HepG2 (cell line): ENCODE measurements at regions of chr11 and their contacts with region 1.

Region 1: DNA sequence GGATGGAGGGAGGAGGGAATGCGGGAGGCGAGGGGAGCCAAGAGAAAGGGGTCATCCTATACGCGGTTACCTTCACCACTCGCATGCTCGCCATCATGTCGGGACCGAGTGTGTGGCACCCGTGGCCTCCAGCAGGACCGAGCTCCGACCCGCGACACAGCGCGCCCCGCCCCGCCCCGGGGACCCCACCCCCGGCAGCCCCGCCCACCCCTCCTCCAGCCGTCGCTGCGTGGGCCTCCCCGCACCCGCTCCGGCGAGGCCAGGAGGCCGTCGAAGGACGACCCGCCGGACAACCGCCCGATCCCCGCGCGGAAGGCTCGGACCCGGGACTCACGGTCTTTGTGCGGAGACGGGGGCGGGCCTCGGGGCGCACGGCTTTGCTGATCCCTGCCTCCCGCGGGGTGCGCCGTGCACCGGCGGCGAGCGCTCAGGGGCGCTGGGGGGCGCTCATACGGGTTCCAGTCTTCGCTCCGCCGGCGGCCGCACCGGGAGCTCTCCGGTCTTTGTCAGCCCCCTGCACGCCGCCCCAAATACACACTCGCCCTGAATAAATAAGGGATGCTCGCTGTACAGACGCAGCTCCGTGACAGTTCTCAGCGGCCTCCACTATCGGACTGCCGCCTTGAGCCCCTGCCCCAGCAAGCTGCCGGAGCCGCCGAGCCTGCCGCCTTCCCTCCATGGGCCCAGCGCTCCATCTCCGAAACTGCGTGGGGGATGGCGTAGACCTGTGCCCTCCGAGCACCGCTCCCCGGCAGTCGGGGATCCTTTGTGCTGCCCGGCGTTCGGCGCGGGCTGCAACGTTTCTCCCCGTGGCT is at the start of gene UBE2L6:
- DNase-seq: no peak
- ATAC-seq: peak; percentile 89
- H3K4me3 ChIP-seq: peak within 1 kb of the TSS; percentile 82 to 98 (median 84)
- H3K27ac ChIP-seq: peak within 1 kb of the TSS; percentile 40
- H3K4me1 ChIP-seq: peaks cover 24% of the 10 kb centered on the region
- H3K27me3 ChIP-seq: no peaks in the 10 kb centered on the region; a peak in 1 of 5 replicates
- CTCF ChIP-seq: peak; percentile 95; the same call in 1 of the 2 replicates
- EP300 ChIP-seq: no peak
- POLR2A ChIP-seq: peak in 1 of 2 experiments; percentile 55; a peak in 1 of 4 replicates
- RAD21 ChIP-seq: no peak; the same call in 1 of the 2 replicates
- total RNA-seq, gene UBE2L6: 30.3 and 37.6 TPM in 2 replicates

Region 2: DNA sequence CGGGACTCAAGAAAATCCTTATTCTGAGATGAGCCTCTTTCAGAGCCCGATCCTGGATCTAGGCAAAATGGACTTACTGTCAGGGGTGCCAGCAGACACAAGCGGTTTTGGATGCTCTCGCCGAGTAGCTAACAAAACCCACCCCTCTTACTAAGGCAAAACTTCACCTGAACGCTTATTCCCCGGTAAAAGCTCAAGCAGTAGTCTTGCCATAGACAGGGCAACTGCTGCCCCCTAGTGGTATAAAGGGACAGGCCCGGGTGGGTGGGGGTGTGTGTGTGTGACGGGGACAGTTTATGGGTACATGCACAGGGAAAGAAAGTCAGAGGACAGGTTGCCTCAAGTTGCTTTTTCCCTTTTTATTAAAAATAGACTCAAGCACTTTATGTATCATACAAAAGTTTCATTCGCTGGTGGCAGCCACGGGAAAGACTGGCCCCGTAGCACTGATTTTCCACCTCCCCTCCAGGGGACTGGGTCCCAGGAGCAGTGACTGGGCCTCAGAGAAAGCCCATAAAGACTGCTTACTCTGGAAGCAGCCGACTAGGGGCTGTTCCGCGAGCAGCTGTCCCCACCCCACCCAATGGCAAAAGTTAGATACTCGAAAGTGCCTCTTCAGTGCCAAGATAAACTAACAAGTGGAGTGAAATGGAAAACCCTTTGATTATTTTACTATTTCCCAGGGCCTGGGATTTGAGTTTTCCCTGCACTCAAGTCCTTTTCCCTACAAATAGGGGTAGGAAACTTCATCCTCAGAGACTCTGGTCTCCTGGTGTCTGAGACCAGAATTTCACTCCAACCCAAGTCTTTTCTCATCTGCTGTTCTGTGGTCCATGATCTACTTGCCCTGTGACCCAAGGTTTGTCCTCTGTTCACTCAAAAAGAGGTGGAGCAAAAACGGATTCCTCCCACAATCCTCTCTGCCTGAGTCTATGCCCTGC is 77.3 kb after region 1 on chr11:
- CTCF ChIA-PET with region 1: interaction called, 79 read pairs
- POLR2A ChIA-PET with region 1: interaction called, 23 read pairs
- in situ Hi-C with region 1: loop called (anchors 5 kb)
- intact Hi-C with region 1: loop called (anchors 1 kb)
- DNase-seq: peak; percentile 69
- ATAC-seq: peak; percentile 81
- H3K4me3 ChIP-seq: no peak overlapping the region
- H3K27ac ChIP-seq: no peak overlapping the region
- H3K4me1 ChIP-seq: peaks cover 37% of the 10 kb centered on the region
- H3K27me3 ChIP-seq: peaks cover 6 to 42% of the 10 kb centered on the region in 2 experiments
- CTCF ChIP-seq: peak; percentile 86
- EP300 ChIP-seq: no peak
- POLR2A ChIP-seq: no peak
- RAD21 ChIP-seq: peak; percentile 52

Region 3: DNA sequence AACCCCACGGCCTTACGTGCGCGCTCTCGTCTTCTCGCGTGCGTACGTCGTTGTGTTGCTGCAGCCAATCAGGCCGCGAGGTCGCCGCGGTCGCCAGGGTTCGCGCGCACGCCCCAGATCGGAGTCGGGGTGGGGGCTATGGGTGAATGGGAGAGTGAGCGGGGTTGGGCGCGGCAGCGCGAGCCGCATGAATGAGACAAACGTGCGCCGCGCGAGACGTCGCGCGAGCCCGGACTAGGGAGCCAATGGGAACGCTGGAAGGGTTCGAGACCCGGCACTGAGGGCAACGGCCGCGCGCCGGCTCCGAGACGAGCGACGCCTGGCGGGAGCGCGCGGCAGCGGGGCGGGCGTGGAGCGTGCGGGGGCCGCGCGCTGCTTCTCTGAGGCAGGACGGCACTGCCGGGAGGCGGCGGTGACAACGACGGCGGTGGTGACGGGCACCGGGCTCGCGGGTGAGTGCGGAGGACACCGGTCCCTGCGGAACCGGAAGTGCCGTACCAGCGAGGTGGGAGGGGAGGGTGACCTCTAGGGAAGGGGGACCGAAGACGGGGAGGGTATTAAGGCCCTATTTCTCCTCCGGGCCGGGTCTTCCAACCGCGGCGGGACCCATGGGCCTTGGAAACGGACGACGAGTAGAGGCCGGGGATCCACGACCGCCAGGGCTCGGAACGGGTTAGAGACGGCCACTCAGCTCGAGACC is 100.2 kb after region 1 on chr11 and contains the start of gene ZDHHC5:
- CTCF ChIA-PET with region 1: no interaction called
- POLR2A ChIA-PET with region 1: no interaction called
- in situ Hi-C with region 1: no loop called
- intact Hi-C with region 1: no loop called
- DNase-seq: peak; percentile 97
- ATAC-seq: peak; percentile 92
- H3K4me3 ChIP-seq: peak within 1 kb of the TSS; percentile 81 to 91 (median 88)
- H3K27ac ChIP-seq: peak within 1 kb of the TSS; percentile 98
- H3K4me1 ChIP-seq: peaks cover 35% of the 10 kb centered on the region
- H3K27me3 ChIP-seq: no peaks in the 10 kb centered on the region; a peak in 1 of 5 replicates
- CTCF ChIP-seq: peak; percentile 57; the same call in 1 of the 2 replicates
- EP300 ChIP-seq: no peak; a peak in 1 of 4 replicates
- POLR2A ChIP-seq: peak; percentile 59 to 88
- RAD21 ChIP-seq: peak; percentile 49; the same call in 1 of the 2 replicates
- total RNA-seq, gene ZDHHC5: 20.3 and 26.6 TPM in 2 replicates